SK-N-SH (cell line): ENCODE measurements at regions of chr22 and their contacts with region 1.

Region 1: GRCh38 chr22:30634471-30635233 is 929 bp upstream of the SLC35E4 start:
- DNase-seq: peak; percentile 90
- H3K4me3 ChIP-seq: peak overlapping the region; percentile 65 to 78
- H3K27ac ChIP-seq: peak overlapping the region; percentile 92 to 93
- H3K4me1 ChIP-seq: peaks cover 18 to 27% of the 10 kb centered on the region in 2 experiments; a peak in 3 of 4 replicates
- H3K27me3 ChIP-seq: no peaks in the 10 kb centered on the region
- CTCF ChIP-seq: peak; percentile 93
- EP300 ChIP-seq: no peak
- RAD21 ChIP-seq: peak; percentile 91

Region 2: GRCh38 chr22:30538280-30538679 is 96.4 kb before region 1 on chr22:
- CTCF ChIA-PET with region 1: no interaction called
- POLR2A ChIA-PET with region 1: no interaction called
- DNase-seq: no peak
- H3K4me3 ChIP-seq: no peak overlapping the region
- H3K27ac ChIP-seq: no peak overlapping the region
- H3K4me1 ChIP-seq: no peaks in the 10 kb centered on the region
- H3K27me3 ChIP-seq: no peaks in the 10 kb centered on the region
- CTCF ChIP-seq: no peak
- EP300 ChIP-seq: no peak
- RAD21 ChIP-seq: no peak

Region 3: DNA sequence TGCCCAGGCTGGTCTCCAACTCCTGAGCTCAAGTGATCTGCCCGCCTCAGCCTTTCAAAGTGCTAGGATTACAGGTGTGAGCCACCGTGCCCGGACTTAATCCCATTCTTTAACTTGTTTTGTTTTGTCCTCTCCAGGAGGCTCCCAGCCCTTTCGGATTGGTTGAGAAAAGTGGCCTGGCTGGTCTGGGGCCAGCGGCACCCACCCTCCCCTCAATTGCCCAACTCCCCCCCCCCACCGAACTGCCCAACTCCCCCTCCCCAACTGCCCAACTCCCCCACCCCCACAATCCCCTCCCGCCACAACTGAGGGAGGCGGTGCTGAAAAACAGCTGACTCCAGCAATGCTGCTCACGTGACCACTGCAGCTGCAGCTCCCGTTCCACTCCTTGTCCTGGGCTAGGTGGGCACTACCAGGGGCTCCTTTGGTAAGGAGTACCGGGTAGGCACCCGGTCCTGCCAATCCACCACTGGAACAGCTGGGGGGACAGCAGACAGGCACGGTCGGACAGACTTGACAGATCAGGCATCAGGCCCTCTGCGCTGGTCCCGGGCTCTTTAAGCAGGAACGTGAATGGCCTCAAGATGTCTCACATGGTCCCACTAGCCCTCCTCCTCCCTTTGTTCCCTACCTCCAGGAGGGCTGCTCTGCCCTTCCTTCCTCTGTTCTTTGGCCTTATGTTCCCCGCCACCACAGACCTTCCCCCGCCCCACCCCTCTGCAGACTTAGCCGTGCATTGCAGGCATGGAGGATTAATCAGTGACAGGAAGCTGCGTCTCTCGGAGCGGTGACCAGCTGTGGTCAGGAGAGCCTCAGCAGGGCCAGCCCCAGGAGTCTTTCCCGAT is 28.0 kb before region 1 on chr22 and contains the start of gene TCN2:
- CTCF ChIA-PET with region 1: interaction called, 24 read pairs
- POLR2A ChIA-PET with region 1: interaction called, 7 read pairs
- DNase-seq: peak; percentile 80
- H3K4me3 ChIP-seq: peak within 1 kb of the TSS; percentile 53 to 56
- H3K27ac ChIP-seq: peak within 1 kb of the TSS in 1 of 2 experiments; percentile 64; a peak in 2 of 4 replicates
- H3K4me1 ChIP-seq: peaks cover 10 to 15% of the 10 kb centered on the region in 2 experiments; a peak in 2 of 4 replicates
- H3K27me3 ChIP-seq: no peaks in the 10 kb centered on the region
- CTCF ChIP-seq: no peak
- EP300 ChIP-seq: no peak
- RAD21 ChIP-seq: no peak
- polyA plus RNA-seq, gene TCN2: 4.1 and 4.5 TPM in 2 replicates

Region 4: DNA sequence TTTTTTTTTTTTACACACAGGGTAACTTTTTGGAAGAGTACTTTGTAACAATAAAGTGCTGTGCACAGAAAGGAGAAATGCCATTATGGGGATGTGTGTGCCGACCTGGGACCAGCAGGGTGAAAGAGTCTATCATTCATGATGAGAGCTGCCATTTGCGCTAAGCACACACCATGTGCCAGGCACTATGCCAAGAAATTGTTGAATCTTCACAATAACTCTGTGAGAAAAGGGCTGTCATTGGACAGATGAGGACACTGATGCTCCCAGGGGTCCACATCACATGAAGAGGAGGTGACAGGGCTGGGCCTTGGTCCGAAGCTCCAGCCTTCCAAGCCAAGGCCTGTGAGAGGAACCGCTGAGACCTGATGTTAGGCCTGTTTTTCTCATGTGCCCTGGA is 27.4 kb after region 1 on chr22:
- CTCF ChIA-PET with region 1: interaction called, 11 read pairs
- POLR2A ChIA-PET with region 1: interaction called, 4 read pairs
- DNase-seq: no peak
- H3K4me3 ChIP-seq: no peak overlapping the region
- H3K27ac ChIP-seq: no peak overlapping the region
- H3K4me1 ChIP-seq: peaks cover 0 to 6% of the 10 kb centered on the region in 2 experiments; a peak in 2 of 4 replicates
- H3K27me3 ChIP-seq: no peaks in the 10 kb centered on the region
- CTCF ChIP-seq: no peak
- EP300 ChIP-seq: no peak
- RAD21 ChIP-seq: no peak

Region 5: GRCh38 chr22:30694171-30694639 is 59.6 kb after region 1 on chr22:
- CTCF ChIA-PET with region 1: interaction called, 31 read pairs
- POLR2A ChIA-PET with region 1: interaction called, 7 read pairs
- DNase-seq: peak; percentile 84
- H3K4me3 ChIP-seq: peak overlapping the region; percentile 64 to 76
- H3K27ac ChIP-seq: peak overlapping the region in 1 of 2 experiments; percentile 84; a peak in 2 of 4 replicates
- H3K4me1 ChIP-seq: peaks cover 0 to 19% of the 10 kb centered on the region in 2 experiments; a peak in 2 of 4 replicates
- H3K27me3 ChIP-seq: no peaks in the 10 kb centered on the region
- CTCF ChIP-seq: no peak
- EP300 ChIP-seq: no peak
- RAD21 ChIP-seq: no peak

Region 6: DNA sequence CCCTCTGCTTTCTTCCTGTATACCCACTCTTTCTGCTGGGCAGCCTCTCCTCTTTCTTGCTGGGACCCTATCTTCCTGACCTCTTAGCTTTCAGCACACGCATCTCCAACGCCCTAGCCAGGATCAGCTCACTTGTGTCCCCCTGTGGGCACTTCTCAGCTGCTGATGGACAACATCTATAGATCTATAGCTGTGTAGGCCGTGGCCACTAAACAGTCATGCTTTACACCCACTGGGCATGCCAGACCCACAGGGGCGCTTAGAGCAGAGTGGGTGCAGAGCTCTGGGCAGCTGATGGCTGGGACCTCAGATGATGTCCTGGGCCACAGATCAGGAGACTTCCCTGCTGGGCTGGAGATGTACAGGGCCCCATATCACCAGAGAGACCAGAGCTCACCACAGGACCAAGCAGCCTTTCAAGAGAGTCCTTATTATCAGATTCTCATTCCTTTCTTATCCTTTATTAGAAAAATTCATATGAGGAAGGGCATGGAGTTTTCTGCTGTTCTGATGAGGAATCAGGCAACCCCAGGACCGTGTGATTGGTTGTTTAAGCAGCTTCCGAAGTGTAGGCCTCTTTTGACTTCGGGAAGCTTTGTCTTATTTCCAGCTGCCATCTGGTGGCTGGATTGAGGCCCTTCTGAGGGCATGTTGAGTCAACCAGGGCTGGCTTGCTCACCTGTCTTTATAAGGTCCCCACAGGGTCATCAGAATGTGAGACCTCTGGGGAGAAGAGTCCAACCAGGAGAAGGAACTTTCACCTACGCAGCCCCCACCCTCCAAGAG is 120.5 kb after region 1 on chr22:
- CTCF ChIA-PET with region 1: interaction called, 162 read pairs
- POLR2A ChIA-PET with region 1: interaction called, 15 read pairs
- DNase-seq: peak; percentile 74
- H3K4me3 ChIP-seq: no peak overlapping the region
- H3K27ac ChIP-seq: no peak overlapping the region
- H3K4me1 ChIP-seq: no peaks in the 10 kb centered on the region; a peak in 2 of 4 replicates
- H3K27me3 ChIP-seq: no peaks in the 10 kb centered on the region
- CTCF ChIP-seq: peak; percentile 83
- EP300 ChIP-seq: no peak
- RAD21 ChIP-seq: peak; percentile 96

Region 7: GRCh38 chr22:30920407-30920806 is 285.8 kb after region 1 on chr22:
- CTCF ChIA-PET with region 1: interaction called, 42 read pairs
- POLR2A ChIA-PET with region 1: interaction called, 3 read pairs
- DNase-seq: peak; percentile 84
- H3K4me3 ChIP-seq: peak overlapping the region in 1 of 2 experiments; percentile 23; a peak in 1 of 4 replicates
- H3K27ac ChIP-seq: no peak overlapping the region
- H3K4me1 ChIP-seq: peaks cover 0 to 10% of the 10 kb centered on the region in 2 experiments; a peak in 1 of 4 replicates
- H3K27me3 ChIP-seq: no peaks in the 10 kb centered on the region
- CTCF ChIP-seq: peak; percentile 96
- EP300 ChIP-seq: no peak
- RAD21 ChIP-seq: peak; percentile 89